ENCODE measurements at regions of chr15 and their contacts with region 1.

Region 1: GRCh38 chr15:89808855-89809786 is 5.5 kb downstream of the ANPEP start:
- DNase-seq: no peak
- H3K4me3 ChIP-seq: no peak overlapping the region
- H3K27ac ChIP-seq: peak overlapping the region; percentile 31
- H3K27me3 ChIP-seq: no peaks in the 10 kb centered on the region
- CTCF ChIP-seq: no peak

Region 2: DNA sequence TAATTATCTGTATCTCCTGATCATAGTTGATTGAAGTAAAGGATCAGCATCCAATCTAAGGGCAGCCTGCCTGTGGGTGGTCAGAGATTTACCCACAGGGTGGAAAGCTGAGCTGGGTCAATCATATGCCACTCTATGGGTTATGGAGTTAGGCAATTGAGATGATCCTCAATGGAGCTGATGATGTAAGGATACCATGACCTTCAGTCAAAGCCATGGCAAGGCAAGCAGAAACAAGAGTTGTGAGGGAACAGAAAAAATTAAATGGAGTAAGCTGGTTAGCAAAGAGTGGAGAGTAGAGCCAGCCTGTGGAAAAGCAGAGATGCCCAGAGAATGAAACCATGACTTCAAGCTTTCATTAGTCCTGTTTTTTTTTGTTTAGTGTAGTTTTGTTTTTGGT is 573.2 kb after region 1 on chr15:
- CTCF ChIA-PET with region 1: no interaction called
- POLR2A ChIA-PET with region 1: interaction called, 10 read pairs
- DNase-seq: no peak
- H3K4me3 ChIP-seq: no peak overlapping the region
- H3K27ac ChIP-seq: no peak overlapping the region
- H3K27me3 ChIP-seq: no peaks in the 10 kb centered on the region
- CTCF ChIP-seq: no peak

Measured in AG04450 (cell line).